Activated CD4-positive, alpha-beta T cell treated with anti-CD3 and anti-CD28 coated beads, Interleukin-2, amount 10 ng/mL, durations not matched to agents 24 days and 14 days (primary cell): ENCODE measurements at regions of chr16 and their contacts with region 1.

Region 1: DNA sequence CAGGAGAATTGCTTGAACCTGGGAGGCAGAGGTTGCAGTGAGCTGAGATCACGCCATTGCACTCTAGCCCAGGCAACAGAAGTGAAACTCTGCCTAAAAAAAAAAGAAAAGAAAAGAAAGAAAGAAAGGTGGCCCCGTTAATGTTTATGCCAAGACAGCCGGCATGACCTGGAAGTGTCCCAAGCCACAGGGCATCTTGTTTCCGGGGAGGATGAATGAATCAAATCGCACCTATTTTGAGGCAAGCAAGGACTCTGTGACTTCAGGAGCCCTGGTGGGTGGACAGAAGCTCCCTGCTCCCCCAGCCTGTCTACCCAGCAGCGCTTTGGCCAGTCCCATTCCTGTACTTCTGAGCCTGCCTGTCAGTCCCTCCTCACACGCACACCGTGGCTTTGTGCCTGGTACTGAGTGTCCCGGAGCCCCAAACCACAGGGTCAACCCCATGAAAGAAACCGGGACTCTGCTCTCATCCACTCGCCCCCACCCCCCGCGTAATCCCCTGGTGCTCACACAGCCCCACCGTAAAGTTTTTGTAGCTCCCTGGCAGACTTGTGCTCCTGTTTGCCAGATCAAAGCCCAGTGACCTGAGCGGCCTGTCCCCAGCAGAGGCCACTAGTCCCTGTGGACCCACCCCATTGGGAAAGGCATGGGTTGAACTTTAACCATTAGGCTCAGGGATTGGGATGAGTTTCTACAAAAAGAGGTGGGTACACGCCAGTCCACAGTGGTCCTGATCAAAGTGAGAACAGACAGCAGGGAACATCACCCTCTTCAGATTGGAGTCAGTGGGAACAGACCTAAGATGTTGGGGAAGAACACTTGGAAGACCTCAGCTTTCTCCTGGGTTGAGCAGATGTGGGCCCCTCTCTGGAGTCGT is 19.3 kb downstream of the CD2BP2 start:
- DNase-seq: no peak
- H3K4me3 Mint-ChIP-seq: peak overlapping the region; percentile 86
- H3K27ac Mint-ChIP-seq: peak overlapping the region; percentile 83
- H3K4me1 Mint-ChIP-seq: peaks cover 13% of the 10 kb centered on the region
- H3K27me3 Mint-ChIP-seq: no peaks in the 10 kb centered on the region

Region 2: GRCh38 chr16:30355144-30355894 is 19.5 kb after region 1 on chr16 and contains the start of gene CD2BP2:
- intact Hi-C with region 1: loop called (anchors 2 kb)
- DNase-seq: peak; percentile 97
- H3K4me3 Mint-ChIP-seq: peak within 1 kb of the TSS; percentile 90
- H3K27ac Mint-ChIP-seq: peak within 1 kb of the TSS; percentile 89
- H3K4me1 Mint-ChIP-seq: peaks cover 37% of the 10 kb centered on the region
- H3K27me3 Mint-ChIP-seq: no peaks in the 10 kb centered on the region
- total RNA-seq, gene CD2BP2: 80.5 and 93.2 TPM in 2 replicates

Region 3: GRCh38 chr16:30378236-30379204 is 42.7 kb after region 1 on chr16:
- intact Hi-C with region 1: loop called (anchors 2 kb)
- DNase-seq: peak; percentile 99
- H3K4me3 Mint-ChIP-seq: peak overlapping the region; percentile 99
- H3K27ac Mint-ChIP-seq: peak overlapping the region; percentile 100
- H3K4me1 Mint-ChIP-seq: peaks cover 43% of the 10 kb centered on the region
- H3K27me3 Mint-ChIP-seq: no peaks in the 10 kb centered on the region